ENCODE measurements at regions of chr6 and their contacts with region 1.

Region 1: DNA sequence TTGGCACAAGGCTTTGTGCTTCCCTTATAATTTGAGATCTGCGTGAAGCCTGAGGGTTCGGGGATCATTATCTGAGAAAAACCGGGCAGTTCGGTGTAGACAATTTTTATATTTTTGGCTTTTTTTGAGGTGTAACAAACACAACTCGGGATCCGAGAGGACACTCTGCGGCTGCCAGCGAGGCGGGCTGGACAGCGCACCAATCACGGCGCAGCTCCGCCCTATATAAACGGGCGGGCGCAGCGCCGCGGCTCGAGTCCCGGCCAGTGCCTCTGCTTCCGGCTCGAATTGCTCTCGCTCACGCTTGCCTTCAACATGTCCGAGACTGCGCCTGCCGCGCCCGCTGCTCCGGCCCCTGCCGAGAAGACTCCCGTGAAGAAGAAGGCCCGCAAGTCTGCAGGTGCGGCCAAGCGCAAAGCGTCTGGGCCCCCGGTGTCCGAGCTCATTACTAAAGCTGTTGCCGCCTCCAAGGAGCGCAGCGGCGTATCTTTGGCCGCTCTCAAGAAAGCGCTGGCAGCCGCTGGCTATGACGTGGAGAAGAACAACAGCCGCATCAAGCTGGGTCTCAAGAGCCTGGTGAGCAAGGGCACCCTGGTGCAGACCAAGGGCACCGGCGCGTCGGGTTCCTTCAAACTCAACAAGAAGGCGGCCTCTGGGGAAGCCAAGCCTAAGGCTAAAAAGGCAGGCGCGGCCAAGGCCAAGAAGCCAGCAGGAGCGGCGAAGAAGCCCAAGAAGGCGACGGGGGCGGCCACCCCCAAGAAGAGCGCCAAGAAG is 69.0 kb downstream of the HFE start:
- DNase-seq: peak; percentile 87
- ATAC-seq: peak; percentile 41
- H3K4me3 Mint-ChIP-seq: peak overlapping the region; percentile 88
- H3K27ac Mint-ChIP-seq: peak overlapping the region; percentile 93
- H3K4me1 Mint-ChIP-seq: peaks cover 36% of the 10 kb centered on the region
- H3K27me3 Mint-ChIP-seq: peaks cover 14% of the 10 kb centered on the region
- CTCF ChIP-seq: no peak

Region 2: GRCh38 chr6:25862189-25862588 is 294.1 kb before region 1 on chr6:
- CTCF ChIA-PET with region 1: no interaction called
- POLR2A ChIA-PET with region 1: no interaction called
- intact Hi-C with region 1: no loop called
- DNase-seq: no peak
- ATAC-seq: no peak
- H3K4me3 Mint-ChIP-seq: no peak overlapping the region
- H3K27ac Mint-ChIP-seq: no peak overlapping the region
- H3K4me1 Mint-ChIP-seq: peaks cover 16% of the 10 kb centered on the region
- H3K27me3 Mint-ChIP-seq: no peaks in the 10 kb centered on the region
- CTCF ChIP-seq: no peak

Region 3: GRCh38 chr6:25981568-25982263 is 174.5 kb before region 1 on chr6:
- CTCF ChIA-PET with region 1: no interaction called
- POLR2A ChIA-PET with region 1: no interaction called
- intact Hi-C with region 1: no loop called
- DNase-seq: no peak
- ATAC-seq: no peak
- H3K4me3 Mint-ChIP-seq: no peak overlapping the region
- H3K27ac Mint-ChIP-seq: peak overlapping the region; percentile 28
- H3K4me1 Mint-ChIP-seq: peaks cover 18% of the 10 kb centered on the region
- H3K27me3 Mint-ChIP-seq: no peaks in the 10 kb centered on the region
- CTCF ChIP-seq: no peak

Region 4: GRCh38 chr6:26031595-26032339 is 124.5 kb before region 1 on chr6:
- CTCF ChIA-PET with region 1: no interaction called
- POLR2A ChIA-PET with region 1: interaction called, 149 read pairs
- intact Hi-C with region 1: no loop called
- DNase-seq: peak; percentile 95
- ATAC-seq: peak; percentile 66
- H3K4me3 Mint-ChIP-seq: peak overlapping the region; percentile 91
- H3K27ac Mint-ChIP-seq: peak overlapping the region; percentile 98
- H3K4me1 Mint-ChIP-seq: peaks cover 50% of the 10 kb centered on the region
- H3K27me3 Mint-ChIP-seq: peaks cover 3% of the 10 kb centered on the region
- CTCF ChIP-seq: no peak

Region 5: DNA sequence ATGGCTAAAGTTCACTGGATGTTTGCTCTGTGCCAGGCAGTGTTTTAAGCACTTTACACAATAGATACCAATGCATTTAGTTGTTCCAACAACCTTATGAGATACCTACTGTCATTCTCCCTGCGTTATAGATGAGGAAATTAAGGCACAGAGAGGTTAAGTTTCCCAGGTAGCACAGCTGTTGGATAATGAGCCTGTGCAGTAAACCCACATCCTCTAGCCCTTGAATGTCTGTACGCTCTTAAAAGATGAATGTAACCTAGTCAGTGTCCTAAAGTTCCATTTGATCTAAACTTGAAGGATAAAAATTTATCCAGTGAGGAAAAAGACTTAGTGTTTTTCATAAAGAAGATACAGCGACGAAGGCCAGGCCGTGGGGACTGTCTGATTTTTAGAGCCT is 41.0 kb before region 1 on chr6:
- CTCF ChIA-PET with region 1: no interaction called
- POLR2A ChIA-PET with region 1: interaction called, 23 read pairs
- intact Hi-C with region 1: no loop called
- DNase-seq: no peak
- ATAC-seq: no peak
- H3K4me3 Mint-ChIP-seq: no peak overlapping the region
- H3K27ac Mint-ChIP-seq: no peak overlapping the region
- H3K4me1 Mint-ChIP-seq: peaks cover 10% of the 10 kb centered on the region
- H3K27me3 Mint-ChIP-seq: peaks cover 4% of the 10 kb centered on the region
- CTCF ChIP-seq: no peak

Region 6: GRCh38 chr6:26183581-26184366 is 27.5 kb after region 1 on chr6:
- CTCF ChIA-PET with region 1: interaction called, 4 read pairs
- POLR2A ChIA-PET with region 1: interaction called, 826 read pairs
- intact Hi-C with region 1: no loop called
- DNase-seq: peak; percentile 72
- ATAC-seq: peak; percentile 82
- H3K4me3 Mint-ChIP-seq: peak overlapping the region; percentile 76
- H3K27ac Mint-ChIP-seq: peak overlapping the region; percentile 84
- H3K4me1 Mint-ChIP-seq: peaks cover 38% of the 10 kb centered on the region
- H3K27me3 Mint-ChIP-seq: no peaks in the 10 kb centered on the region
- CTCF ChIP-seq: no peak

Region 7: GRCh38 chr6:26223650-26224546 is 67.6 kb after region 1 on chr6:
- CTCF ChIA-PET with region 1: interaction called, 3 read pairs
- POLR2A ChIA-PET with region 1: interaction called, 27 read pairs
- intact Hi-C with region 1: no loop called
- DNase-seq: peak; percentile 77
- ATAC-seq: peak; percentile 82
- H3K4me3 Mint-ChIP-seq: no peak overlapping the region
- H3K27ac Mint-ChIP-seq: no peak overlapping the region
- H3K4me1 Mint-ChIP-seq: peaks cover 14% of the 10 kb centered on the region
- H3K27me3 Mint-ChIP-seq: no peaks in the 10 kb centered on the region
- CTCF ChIP-seq: no peak

Region 8: GRCh38 chr6:26285143-26286134 is 129.2 kb after region 1 on chr6:
- CTCF ChIA-PET with region 1: no interaction called
- POLR2A ChIA-PET with region 1: interaction called, 36 read pairs
- intact Hi-C with region 1: no loop called
- DNase-seq: peak; percentile 99
- ATAC-seq: peak; percentile 79
- H3K4me3 Mint-ChIP-seq: peak overlapping the region; percentile 88
- H3K27ac Mint-ChIP-seq: peak overlapping the region; percentile 100
- H3K4me1 Mint-ChIP-seq: peaks cover 15% of the 10 kb centered on the region
- H3K27me3 Mint-ChIP-seq: peaks cover 2% of the 10 kb centered on the region
- CTCF ChIP-seq: no peak

Measured in activated CD8-positive, alpha-beta T cell treated with anti-CD3 and anti-CD28 coated beads for 36 hours (primary cell).